Right ventricle myocardium inferior (tissue), 1 donor: ENCODE measurements at regions of chr13 and their contacts with region 1.

Region 1: DNA sequence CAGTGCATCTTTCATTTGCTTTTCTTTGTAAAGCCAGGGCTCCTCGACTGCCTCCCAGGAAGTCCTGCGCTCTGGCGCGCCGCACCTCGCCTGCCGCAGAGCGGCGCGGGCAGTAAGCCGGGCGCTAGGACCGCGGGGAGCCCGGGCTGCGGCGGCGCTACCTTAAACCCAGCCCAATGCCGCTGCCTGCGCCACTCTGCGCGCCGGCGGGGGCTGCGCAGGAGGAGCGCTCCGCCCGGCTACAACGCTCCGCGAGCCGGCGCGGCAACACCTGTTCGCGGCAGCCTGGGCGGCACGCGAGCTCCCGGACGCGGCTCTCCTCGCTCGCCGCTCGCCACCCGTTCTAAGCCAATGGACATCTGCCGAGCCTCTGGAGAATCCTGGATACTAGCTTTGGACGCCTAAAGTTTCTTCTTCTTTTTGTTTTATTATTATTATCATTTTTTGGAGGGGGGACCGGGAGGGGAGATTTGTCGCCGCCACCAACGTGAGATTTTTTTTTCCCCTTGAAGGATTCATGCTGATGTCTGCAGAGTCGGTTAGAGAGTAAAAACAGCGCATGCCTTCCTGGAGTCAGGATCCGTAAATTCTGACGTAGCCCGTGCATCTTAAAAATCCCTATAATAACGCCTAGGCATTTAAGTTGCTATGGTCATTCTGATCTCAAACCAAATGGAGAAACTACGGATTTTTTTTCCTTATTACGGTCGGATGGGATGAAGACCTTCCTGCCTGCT is at the start of gene FGF9:
- DNase-seq: peak; percentile 86
- ATAC-seq: peak; percentile 88
- total RNA-seq, gene FGF9: 12.6 TPM

Region 2: GRCh38 chr13:21603531-21604448 is 67.3 kb before region 1 on chr13 and contains the start of gene MICU2:
- intact Hi-C with region 1: loop called (anchors 5 kb)
- DNase-seq: peak; percentile 98
- ATAC-seq: peak; percentile 99
- total RNA-seq, gene MICU2: 60.7 TPM

Region 3: DNA sequence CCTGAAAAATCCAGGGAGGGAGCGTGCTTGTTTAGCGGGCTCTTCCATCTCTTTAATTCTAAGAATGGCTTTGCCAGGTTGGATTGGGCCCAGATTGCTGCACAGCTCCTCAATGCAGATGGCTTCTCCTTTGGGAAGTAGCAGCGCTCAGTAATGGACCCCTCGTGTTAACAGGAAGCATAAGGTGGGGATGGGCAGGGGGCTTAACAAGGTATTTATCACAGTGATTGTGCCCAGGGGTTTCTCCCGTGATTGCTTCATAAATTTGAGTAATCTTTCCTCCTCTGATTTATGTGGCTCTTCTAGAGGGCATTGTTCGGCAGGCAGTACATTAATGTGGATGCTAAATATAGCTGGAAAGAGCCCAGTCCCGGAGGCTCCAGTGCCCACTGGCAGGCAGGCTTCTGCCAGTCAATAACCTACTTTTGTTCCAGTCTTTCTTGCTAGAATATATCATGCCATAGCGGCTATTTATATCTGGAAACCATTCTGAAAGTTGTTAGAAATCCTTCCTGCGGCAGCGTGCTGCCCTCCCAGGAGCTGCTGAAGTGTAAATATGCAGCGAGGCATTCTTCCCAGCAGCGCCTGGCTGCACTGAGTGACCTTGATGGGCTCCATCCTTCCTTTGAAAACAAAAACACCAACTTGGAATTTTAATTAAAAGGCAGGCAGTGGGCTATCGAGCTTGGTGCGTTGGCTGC is 64.8 kb after region 1 on chr13:
- intact Hi-C with region 1: loop called (anchors 2 kb)
- DNase-seq: no peak
- ATAC-seq: peak; percentile 81

Region 4: GRCh38 chr13:21825186-21825585 is 154.1 kb after region 1 on chr13:
- intact Hi-C with region 1: loop called (anchors 10 kb)
- DNase-seq: no peak
- ATAC-seq: no peak

Region 5: DNA sequence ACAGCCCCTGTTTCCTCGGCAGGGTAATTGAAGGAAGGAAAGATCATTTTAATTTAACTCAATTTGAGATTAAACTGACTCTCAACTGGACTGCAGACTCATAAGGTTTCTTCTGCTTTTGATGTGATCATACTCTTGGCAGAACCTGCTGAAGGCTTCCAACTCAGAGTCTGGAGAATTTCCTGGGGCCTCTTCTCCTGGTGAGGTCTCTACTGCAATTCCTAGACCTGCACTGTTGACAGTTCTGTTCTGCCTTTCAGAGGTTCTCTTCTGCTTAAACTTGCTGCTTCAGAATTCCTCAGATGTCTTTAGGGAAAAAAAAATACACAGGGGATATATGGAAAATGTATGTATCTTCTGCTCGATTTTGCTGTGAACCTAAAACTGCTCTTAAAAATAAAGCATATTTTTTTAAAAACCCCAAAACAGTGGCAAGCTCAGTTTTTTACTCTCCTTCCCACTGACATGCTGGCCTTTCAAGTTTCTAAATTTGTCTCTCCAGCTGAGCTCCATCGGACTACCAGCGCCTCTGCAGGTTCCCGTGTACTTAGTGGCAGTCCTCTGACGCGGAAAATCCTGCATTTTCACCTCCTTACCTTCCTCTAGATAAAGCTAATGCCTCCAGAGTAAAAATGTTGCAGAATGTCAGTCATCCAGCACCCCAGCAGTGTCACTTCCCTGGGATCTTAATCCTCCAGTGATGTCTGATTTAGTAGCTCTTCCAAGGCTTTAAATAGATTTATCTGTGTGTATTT is 776.3 kb after region 1 on chr13:
- intact Hi-C with region 1: loop called (anchors 10 kb)
- DNase-seq: no peak
- ATAC-seq: no peak